CD8-positive, alpha-beta T cell (primary cell): ENCODE measurements at regions of chr5 and their contacts with region 1.

Region 1: GRCh38 chr5:137320056-137321045 is 178.8 kb downstream of the SPOCK1 start:
- DNase-seq: peak in 4 of 9 experiments; percentile 8 to 34 (median 12)
- ATAC-seq: no peak
- H3K4me3 ChIP-seq: no peak overlapping the region
- H3K4me3 Mint-ChIP-seq: no peak overlapping the region
- H3K27ac ChIP-seq: no peak overlapping the region
- H3K27ac Mint-ChIP-seq: no peak overlapping the region
- H3K4me1 ChIP-seq: no peaks in the 10 kb centered on the region
- H3K4me1 Mint-ChIP-seq: no peaks in the 10 kb centered on the region
- H3K27me3 ChIP-seq: no peaks in the 10 kb centered on the region
- H3K27me3 Mint-ChIP-seq: peaks cover 14% of the 10 kb centered on the region
- CTCF ChIP-seq: peak; percentile 45

Region 2: DNA sequence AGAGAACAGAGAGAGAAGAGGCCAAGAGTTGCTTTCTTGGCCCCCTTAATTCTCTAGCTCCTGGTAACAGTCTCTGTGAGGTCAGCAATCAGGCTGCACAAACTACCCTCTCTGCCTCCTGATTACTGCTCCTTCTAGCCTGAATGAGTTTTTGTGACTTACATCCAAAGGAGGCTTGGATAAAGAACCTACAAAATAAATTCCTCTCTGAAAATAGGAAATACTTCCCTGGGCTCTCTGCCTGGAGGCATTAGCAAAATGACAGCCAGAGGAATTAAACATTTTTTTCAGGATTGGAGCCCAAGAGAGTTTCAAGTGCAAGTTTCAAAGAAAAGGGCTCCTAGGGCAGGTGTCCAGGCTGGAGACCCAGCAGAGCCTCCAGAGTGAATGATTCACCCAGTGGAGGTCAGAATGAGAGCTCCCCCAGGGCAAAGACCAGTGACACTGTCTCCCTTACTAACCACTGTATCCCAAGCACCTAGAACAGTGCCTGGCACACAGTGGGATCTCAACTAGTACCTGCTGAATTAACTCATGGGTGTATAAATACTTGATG is 16.3 kb after region 1 on chr5:
- CTCF ChIA-PET with region 1: no interaction called
- POLR2A ChIA-PET with region 1: no interaction called
- intact Hi-C with region 1: no loop called
- DNase-seq: no peak
- ATAC-seq: no peak
- H3K4me3 ChIP-seq: no peak overlapping the region
- H3K4me3 Mint-ChIP-seq: no peak overlapping the region
- H3K27ac ChIP-seq: no peak overlapping the region
- H3K27ac Mint-ChIP-seq: no peak overlapping the region
- H3K4me1 ChIP-seq: no peaks in the 10 kb centered on the region
- H3K4me1 Mint-ChIP-seq: no peaks in the 10 kb centered on the region
- H3K27me3 ChIP-seq: no peaks in the 10 kb centered on the region
- H3K27me3 Mint-ChIP-seq: peaks cover 6% of the 10 kb centered on the region
- CTCF ChIP-seq: no peak

Region 3: DNA sequence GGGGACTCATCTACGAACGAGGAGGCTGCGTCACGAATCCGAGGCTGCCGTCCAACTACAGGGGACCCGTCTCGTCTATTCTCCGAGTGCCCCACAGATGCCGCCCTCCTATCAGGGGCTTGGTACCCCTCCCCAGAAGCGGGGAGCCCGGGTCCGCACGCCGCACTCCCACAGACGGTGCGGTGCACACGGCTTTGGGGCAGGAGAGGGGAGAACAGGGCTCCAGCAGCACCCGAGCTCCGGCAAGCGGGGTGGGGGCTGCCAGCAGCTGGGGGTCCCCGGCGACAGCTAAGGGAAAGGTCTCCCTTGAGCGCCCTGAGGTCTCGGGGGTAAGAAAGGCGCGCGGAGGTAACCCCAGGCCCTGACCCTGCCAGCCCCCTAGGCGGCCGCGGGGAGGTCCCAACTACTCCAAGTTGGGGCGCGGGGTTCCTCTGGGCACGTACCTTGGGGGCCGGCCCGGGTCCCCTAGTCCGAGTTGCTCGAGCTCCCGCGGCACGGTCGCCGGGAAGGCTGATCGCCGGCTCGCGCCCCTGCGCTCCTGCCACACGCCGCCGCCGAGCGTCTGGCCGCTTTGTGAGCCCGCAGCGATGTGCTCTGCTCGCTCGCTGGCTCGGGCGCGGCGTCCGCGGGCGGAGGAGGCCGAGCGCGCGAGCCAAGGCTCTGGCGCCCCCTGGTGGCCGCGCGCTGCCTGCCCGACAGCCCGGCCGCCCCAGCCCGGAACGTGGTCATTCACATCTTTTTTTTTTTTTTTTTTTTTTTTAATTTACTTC is 178.6 kb after region 1 on chr5 and contains the start of gene SPOCK1:
- CTCF ChIA-PET with region 1: no interaction called
- POLR2A ChIA-PET with region 1: no interaction called
- intact Hi-C with region 1: loop called in 1 of 2 experiments (anchors 5 kb)
- DNase-seq: peak in 7 of 9 experiments; percentile 13 to 62 (median 37)
- ATAC-seq: no peak
- H3K4me3 ChIP-seq: no peak within 1 kb of the TSS
- H3K4me3 Mint-ChIP-seq: no peak within 1 kb of the TSS
- H3K27ac ChIP-seq: no peak within 1 kb of the TSS
- H3K27ac Mint-ChIP-seq: no peak within 1 kb of the TSS
- H3K4me1 ChIP-seq: no peaks in the 10 kb centered on the region
- H3K4me1 Mint-ChIP-seq: no peaks in the 10 kb centered on the region
- H3K27me3 ChIP-seq: peaks cover 0 to 3% of the 10 kb centered on the region in 2 experiments
- H3K27me3 Mint-ChIP-seq: peaks cover 27% of the 10 kb centered on the region
- CTCF ChIP-seq: peak; percentile 52
- total RNA-seq, gene SPOCK1: not detected

Region 4: GRCh38 chr5:138138949-138139780 is 818.8 kb after region 1 on chr5 and contains the start of gene NME5:
- CTCF ChIA-PET with region 1: no interaction called
- POLR2A ChIA-PET with region 1: no interaction called
- intact Hi-C with region 1: loop called in 1 of 2 experiments (anchors 10 kb)
- DNase-seq: no peak
- ATAC-seq: no peak
- H3K4me3 ChIP-seq: no peak within 1 kb of the TSS
- H3K4me3 Mint-ChIP-seq: no peak within 1 kb of the TSS
- H3K27ac ChIP-seq: no peak within 1 kb of the TSS
- H3K27ac Mint-ChIP-seq: no peak within 1 kb of the TSS
- H3K4me1 ChIP-seq: no peaks in the 10 kb centered on the region
- H3K4me1 Mint-ChIP-seq: no peaks in the 10 kb centered on the region
- H3K27me3 ChIP-seq: no peaks in the 10 kb centered on the region
- H3K27me3 Mint-ChIP-seq: peaks cover 26% of the 10 kb centered on the region
- CTCF ChIP-seq: no peak
- total RNA-seq, gene NME5: not detected